Sciatic nerve (tissue), 2 donors: ENCODE measurements at regions of chrX and their contacts with region 1.

Region 1: DNA sequence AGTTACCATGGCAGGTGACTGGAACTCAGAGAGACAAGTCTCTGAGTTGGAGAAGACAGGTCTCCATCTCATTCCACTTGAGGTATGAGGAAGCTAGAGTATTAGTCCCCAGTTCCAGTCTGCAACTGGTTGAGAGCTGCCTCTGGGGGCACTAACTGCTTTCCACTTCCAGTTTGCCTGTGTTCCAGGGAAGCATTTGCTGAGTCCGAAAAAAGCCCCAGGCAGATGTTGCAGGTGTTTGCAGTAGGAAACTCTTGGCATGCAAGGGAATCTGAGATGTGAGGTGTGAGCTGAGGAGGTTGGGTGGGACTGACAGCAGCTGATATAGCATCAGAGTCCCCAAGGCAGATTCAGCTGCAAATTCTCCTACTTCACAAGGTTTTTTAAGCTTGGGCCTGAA is 272.2 kb upstream of the CASK start:
- DNase-seq: no peak
- ATAC-seq: no peak

Region 2: DNA sequence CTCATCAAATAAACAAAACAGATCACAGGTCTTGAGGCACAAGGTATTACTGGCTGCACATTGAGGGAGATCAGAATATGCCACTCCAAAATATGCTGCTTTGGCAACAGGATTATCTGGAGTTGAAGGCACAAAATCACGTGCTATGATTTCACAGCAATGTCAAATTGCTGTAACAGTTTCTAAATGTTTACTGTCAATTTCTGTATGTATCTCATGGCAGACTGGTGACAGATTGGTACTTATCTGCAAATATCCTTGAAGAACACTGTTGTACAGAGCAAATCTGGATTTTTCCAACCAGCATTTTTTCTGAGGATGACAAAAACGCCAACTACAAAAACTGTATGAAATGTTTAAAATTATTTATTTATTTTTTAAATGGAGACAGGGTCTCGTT is 444.8 kb before region 1 on chrX:
- intact Hi-C with region 1: no loop called
- DNase-seq: no peak
- ATAC-seq: no peak

Region 3: GRCh38 chrX:42219231-42219630 is 23.7 kb after region 1 on chrX:
- intact Hi-C with region 1: no loop called
- DNase-seq: no peak
- ATAC-seq: no peak

Region 4: DNA sequence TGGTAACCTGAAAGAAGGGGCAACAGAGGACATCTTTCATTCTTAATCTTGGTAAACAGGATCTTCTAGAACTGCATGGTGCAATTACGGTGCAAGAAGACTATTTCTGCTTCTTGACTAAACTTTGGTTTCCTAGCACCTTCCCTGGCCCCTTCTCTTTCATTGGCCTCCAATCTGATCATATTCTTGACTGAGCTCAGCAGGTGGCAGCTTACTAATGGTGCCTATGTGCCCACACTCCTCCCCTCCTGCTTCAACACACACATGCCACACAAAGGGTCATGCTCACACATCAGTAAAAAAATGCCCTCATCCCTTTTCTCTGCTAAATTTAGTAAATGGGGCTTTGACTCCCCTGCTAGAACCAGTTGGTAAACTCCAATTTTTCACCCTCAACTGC is 1060.1 kb after region 1 on chrX:
- intact Hi-C with region 1: loop called (anchors 10 kb)
- DNase-seq: no peak
- ATAC-seq: no peak